Activated CD8-positive, alpha-beta memory T cell treated with anti-CD3 and anti-CD28 coated beads, Interleukin-2, amount 10 ng/mL, durations not matched to agents 7 days and 5 days (primary cell): ENCODE measurements at regions of chr17 and their contacts with region 1.

Region 1: GRCh38 chr17:28842282-28843012 is at the start of gene FAM222B:
- DNase-seq: peak; percentile 90
- ATAC-seq: peak; percentile 100
- H3K4me3 Mint-ChIP-seq: peak within 1 kb of the TSS; percentile 99
- H3K27ac Mint-ChIP-seq: peak within 1 kb of the TSS; percentile 96
- H3K4me1 Mint-ChIP-seq: peaks cover 21% of the 10 kb centered on the region
- H3K27me3 Mint-ChIP-seq: no peaks in the 10 kb centered on the region
- total RNA-seq, gene FAM222B: 14.5 to 19.6 TPM

Region 2: GRCh38 chr17:28828294-28829040 is 14.0 kb before region 1 on chr17:
- CTCF ChIA-PET with region 1: interaction called, 11 read pairs
- DNase-seq: no peak
- ATAC-seq: no peak
- H3K4me3 Mint-ChIP-seq: no peak overlapping the region
- H3K27ac Mint-ChIP-seq: no peak overlapping the region
- H3K4me1 Mint-ChIP-seq: peaks cover 3% of the 10 kb centered on the region
- H3K27me3 Mint-ChIP-seq: no peaks in the 10 kb centered on the region